ENCODE measurements at regions of chr17 and their contacts with region 1.

Region 1: DNA sequence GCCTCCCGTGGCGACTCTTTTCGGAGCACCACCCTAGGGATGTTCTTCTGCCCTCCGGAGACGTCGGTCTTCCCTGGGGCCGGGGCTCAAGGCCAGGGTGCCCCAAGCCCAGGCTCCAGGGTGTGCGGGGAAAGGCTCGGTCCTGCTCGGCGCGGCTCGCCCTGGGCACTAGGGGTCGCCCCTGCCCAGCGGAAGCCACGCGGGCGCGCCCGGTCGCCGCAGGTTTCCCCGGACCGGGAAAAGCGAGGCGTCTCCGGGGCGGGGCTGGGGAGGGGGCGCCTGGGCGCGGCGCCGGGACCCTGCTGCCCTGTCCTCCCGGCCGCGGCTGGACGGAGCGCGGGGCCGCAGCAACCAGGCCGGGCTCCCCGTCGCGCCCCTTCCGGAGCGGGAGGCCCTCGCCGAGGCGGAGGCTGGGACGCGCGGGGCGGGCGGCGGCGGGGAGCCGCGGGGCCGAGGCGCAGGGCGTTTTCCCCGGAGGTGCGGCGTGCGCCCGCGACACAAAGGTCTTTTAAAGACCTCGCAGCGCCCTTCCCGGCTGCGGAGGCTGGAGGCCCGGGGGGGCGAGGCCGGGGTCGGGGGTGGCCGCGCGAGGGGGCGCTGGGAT is 76.4 kb downstream of the MRC2 start:
- DNase-seq: peak; percentile 81 to 91
- ATAC-seq: peak; percentile 91
- H3K4me3 ChIP-seq: peak overlapping the region; percentile 50 to 81
- H3K27ac ChIP-seq: no peak overlapping the region
- H3K4me1 ChIP-seq: no peaks in the 10 kb centered on the region
- H3K27me3 ChIP-seq: no peaks in the 10 kb centered on the region

Region 2: GRCh38 chr17:62968445-62968923 is 264.6 kb after region 1 on chr17:
- intact Hi-C with region 1: loop called (anchors 1 to 2 kb)
- DNase-seq: no peak
- ATAC-seq: peak; percentile 76
- H3K4me3 ChIP-seq: no peak overlapping the region
- H3K27ac ChIP-seq: no peak overlapping the region
- H3K4me1 ChIP-seq: no peaks in the 10 kb centered on the region
- H3K27me3 ChIP-seq: no peaks in the 10 kb centered on the region

Region 3: DNA sequence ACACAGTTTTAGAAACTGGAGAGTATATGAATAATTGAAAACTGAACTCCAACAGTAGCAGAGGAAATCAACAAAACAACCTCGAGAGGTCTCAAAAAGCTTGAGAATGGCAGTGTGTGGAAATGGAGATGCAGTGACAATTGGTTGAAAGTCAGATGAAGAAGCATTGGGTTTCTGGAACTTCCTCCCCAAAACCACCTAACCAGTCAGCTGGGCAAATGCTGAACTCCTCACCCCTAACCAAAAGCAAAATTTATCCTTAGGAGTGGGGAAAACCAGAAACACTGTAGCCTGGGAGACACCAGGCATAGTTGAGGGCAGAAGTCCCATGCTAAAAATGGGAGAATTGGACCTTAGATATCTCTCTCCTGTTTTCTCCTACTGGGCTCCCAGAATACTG is 372.1 kb after region 1 on chr17:
- intact Hi-C with region 1: loop called in 1 of 2 experiments (anchors 10 kb)
- DNase-seq: no peak
- ATAC-seq: no peak
- H3K4me3 ChIP-seq: no peak overlapping the region
- H3K27ac ChIP-seq: no peak overlapping the region
- H3K4me1 ChIP-seq: no peaks in the 10 kb centered on the region
- H3K27me3 ChIP-seq: no peaks in the 10 kb centered on the region

Region 4: GRCh38 chr17:63406689-63407330 is 702.9 kb after region 1 on chr17:
- intact Hi-C with region 1: loop called in 1 of 2 experiments (anchors 10 kb)
- DNase-seq: peak in 1 of 2 donors; percentile 63
- ATAC-seq: peak; percentile 89
- H3K4me3 ChIP-seq: no peak overlapping the region
- H3K27ac ChIP-seq: peak overlapping the region; percentile 17 to 69
- H3K4me1 ChIP-seq: peaks cover 0 to 9% of the 10 kb centered on the region in 2 donors
- H3K27me3 ChIP-seq: no peaks in the 10 kb centered on the region

Region 5: DNA sequence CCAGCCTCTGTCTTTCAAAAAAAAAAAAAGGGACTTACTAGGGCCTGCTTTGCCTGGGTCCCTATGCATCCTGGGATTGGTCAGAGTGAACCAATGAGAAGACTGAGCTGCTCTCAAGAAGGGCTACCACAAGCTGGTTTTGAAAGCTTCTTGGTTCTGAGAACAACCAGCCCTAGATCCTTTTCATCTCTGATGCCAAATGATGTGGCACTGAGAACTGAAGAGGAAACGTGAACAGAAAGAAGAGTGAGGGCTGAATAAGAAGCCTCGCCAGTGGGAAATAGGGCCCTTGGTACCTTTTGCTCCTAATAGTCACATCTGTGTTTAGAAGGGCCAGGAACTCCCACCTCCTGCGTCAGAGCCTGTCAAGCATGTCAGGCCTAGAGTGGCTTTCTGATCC is 907.5 kb after region 1 on chr17:
- intact Hi-C with region 1: loop called in 1 of 2 experiments (anchors 10 kb)
- DNase-seq: no peak
- ATAC-seq: no peak
- H3K4me3 ChIP-seq: no peak overlapping the region
- H3K27ac ChIP-seq: no peak overlapping the region
- H3K4me1 ChIP-seq: no peaks in the 10 kb centered on the region
- H3K27me3 ChIP-seq: no peaks in the 10 kb centered on the region